CD8-positive, alpha-beta memory T cell (primary cell): ENCODE measurements at regions of chr3 and their contacts with region 1.

Region 1: DNA sequence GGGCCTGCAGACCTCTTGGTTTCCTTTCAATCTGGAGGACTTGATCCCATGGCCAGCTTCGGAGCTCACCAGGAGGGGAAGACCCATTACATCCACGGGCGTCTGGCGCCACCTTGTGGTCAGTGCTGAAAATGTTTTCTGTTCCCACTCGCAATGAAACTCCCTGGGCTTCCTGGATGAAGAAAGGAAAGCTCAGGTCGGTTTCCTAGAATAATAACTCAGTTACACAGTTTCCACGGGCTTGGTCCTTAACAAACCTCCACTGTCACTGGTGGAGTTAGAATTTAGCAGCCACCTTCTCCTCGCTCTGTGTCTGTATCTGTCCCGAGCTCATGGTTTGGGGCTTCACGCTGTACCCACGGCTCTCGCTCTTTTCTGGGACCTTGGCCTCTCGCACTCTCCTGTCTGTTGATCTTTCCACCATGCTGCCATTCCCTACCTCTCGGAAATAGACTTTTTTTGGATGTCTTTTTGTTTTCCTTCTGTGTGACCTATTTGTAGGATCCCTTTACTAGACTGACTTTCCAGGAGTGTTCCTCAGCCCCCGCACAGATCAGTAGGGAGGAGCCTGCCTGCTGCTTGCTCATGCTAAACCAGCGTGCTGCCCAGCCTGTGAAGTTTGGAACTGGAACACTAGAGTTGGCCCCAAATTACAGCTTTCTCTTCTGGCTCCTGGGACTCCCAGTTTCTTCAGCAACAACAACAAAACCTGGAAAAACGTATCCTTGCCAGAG is 56.3 kb downstream of the IL20RB start:
- DNase-seq: peak; percentile 71 to 87 (median 77)
- H3K4me3 ChIP-seq: peak overlapping the region; percentile 63
- H3K4me3 Mint-ChIP-seq: peak overlapping the region; percentile 3 to 84 (median 76)
- H3K27ac ChIP-seq: peak overlapping the region; percentile 49
- H3K27ac Mint-ChIP-seq: peak overlapping the region in 4 of 8 donors; percentile 53 to 84 (median 69)
- H3K4me1 ChIP-seq: peaks cover 11% of the 10 kb centered on the region
- H3K4me1 Mint-ChIP-seq: peaks cover 5 to 11% (median 9%) of the 10 kb centered on the region in 3 donors
- H3K27me3 ChIP-seq: no peaks in the 10 kb centered on the region
- H3K27me3 Mint-ChIP-seq: no peaks in the 10 kb centered on the region

Region 2: GRCh38 chr3:136075218-136075808 is 938.8 kb before region 1 on chr3:
- CTCF ChIA-PET with region 1: interaction called, 24 read pairs
- POLR2A ChIA-PET with region 1: no interaction called
- DNase-seq: peak; percentile 54 to 80 (median 59)
- H3K4me3 ChIP-seq: no peak overlapping the region
- H3K4me3 Mint-ChIP-seq: no peak overlapping the region
- H3K27ac ChIP-seq: no peak overlapping the region
- H3K27ac Mint-ChIP-seq: no peak overlapping the region
- H3K4me1 ChIP-seq: no peaks in the 10 kb centered on the region
- H3K4me1 Mint-ChIP-seq: peaks cover 3 to 5% (median 4%) of the 10 kb centered on the region in 3 donors
- H3K27me3 ChIP-seq: no peaks in the 10 kb centered on the region
- H3K27me3 Mint-ChIP-seq: peaks cover 2 to 13% of the 10 kb centered on the region in 2 donors

Region 3: GRCh38 chr3:136396916-136397315 is 617.2 kb before region 1 on chr3:
- CTCF ChIA-PET with region 1: interaction called, 27 read pairs
- POLR2A ChIA-PET with region 1: interaction called, 3 read pairs
- DNase-seq: no peak
- H3K4me3 ChIP-seq: no peak overlapping the region
- H3K4me3 Mint-ChIP-seq: no peak overlapping the region
- H3K27ac ChIP-seq: no peak overlapping the region
- H3K27ac Mint-ChIP-seq: no peak overlapping the region
- H3K4me1 ChIP-seq: no peaks in the 10 kb centered on the region
- H3K4me1 Mint-ChIP-seq: peaks cover 0 to 2% (median 0%) of the 10 kb centered on the region in 3 donors
- H3K27me3 ChIP-seq: no peaks in the 10 kb centered on the region
- H3K27me3 Mint-ChIP-seq: no peaks in the 10 kb centered on the region

Region 4: GRCh38 chr3:137032465-137033120 is 18.5 kb after region 1 on chr3:
- CTCF ChIA-PET with region 1: interaction called, 12 read pairs
- POLR2A ChIA-PET with region 1: no interaction called
- DNase-seq: peak; percentile 46 to 81 (median 57)
- H3K4me3 ChIP-seq: peak overlapping the region; percentile 47
- H3K4me3 Mint-ChIP-seq: peak overlapping the region; percentile 7 to 86 (median 78)
- H3K27ac ChIP-seq: no peak overlapping the region
- H3K27ac Mint-ChIP-seq: peak overlapping the region in 1 of 8 donors; percentile 2
- H3K4me1 ChIP-seq: no peaks in the 10 kb centered on the region
- H3K4me1 Mint-ChIP-seq: peaks cover 9 to 10% (median 9%) of the 10 kb centered on the region in 3 donors
- H3K27me3 ChIP-seq: peaks cover 18% of the 10 kb centered on the region
- H3K27me3 Mint-ChIP-seq: peaks cover 20 to 31% of the 10 kb centered on the region in 2 donors

Region 5: DNA sequence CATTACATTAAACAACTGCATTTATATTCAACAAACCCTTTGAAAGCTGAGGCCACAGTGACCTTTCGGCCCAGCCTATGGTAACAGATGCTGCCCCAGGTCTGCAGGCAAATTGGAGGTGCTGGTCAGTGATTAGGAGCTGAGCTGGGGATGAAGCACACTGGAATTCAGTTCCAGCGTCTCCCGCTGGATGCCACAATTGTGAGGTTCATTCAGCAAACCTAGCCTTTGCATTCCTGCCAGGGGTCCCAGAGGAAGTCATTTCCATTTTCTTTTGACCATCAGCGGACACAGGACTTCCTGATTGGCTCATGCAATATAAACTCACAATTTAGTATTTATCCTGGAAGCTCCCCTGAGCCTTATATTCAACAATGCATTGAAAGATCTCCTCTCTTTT is 33.1 kb after region 1 on chr3:
- CTCF ChIA-PET with region 1: no interaction called
- POLR2A ChIA-PET with region 1: no interaction called
- DNase-seq: no peak
- H3K4me3 ChIP-seq: no peak overlapping the region
- H3K4me3 Mint-ChIP-seq: no peak overlapping the region
- H3K27ac ChIP-seq: no peak overlapping the region
- H3K27ac Mint-ChIP-seq: no peak overlapping the region
- H3K4me1 ChIP-seq: no peaks in the 10 kb centered on the region
- H3K4me1 Mint-ChIP-seq: no peaks in the 10 kb centered on the region
- H3K27me3 ChIP-seq: no peaks in the 10 kb centered on the region
- H3K27me3 Mint-ChIP-seq: peaks cover 23 to 50% of the 10 kb centered on the region in 2 donors

Region 6: DNA sequence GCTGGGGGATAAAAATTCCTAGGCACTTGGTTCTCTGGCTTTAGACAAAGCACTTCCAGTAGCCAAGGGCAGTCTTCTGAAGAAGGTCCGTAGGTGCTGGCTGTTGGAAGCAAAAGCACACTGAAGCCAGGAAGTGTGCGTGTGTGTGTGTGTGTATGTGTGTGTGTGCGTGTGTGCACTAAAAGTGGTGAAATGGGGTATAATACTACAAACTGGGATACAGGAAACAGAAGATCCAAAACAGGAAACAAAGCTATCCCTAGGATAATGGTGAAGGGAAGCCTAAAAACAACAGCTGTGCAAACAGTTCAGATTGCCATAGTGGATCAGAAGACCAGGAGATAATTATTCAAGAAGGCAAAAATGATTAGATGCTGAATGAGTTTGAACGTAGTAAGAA is 47.1 kb after region 1 on chr3:
- CTCF ChIA-PET with region 1: no interaction called
- POLR2A ChIA-PET with region 1: no interaction called
- DNase-seq: no peak
- H3K4me3 ChIP-seq: no peak overlapping the region
- H3K4me3 Mint-ChIP-seq: no peak overlapping the region
- H3K27ac ChIP-seq: no peak overlapping the region
- H3K27ac Mint-ChIP-seq: no peak overlapping the region
- H3K4me1 ChIP-seq: no peaks in the 10 kb centered on the region
- H3K4me1 Mint-ChIP-seq: peaks cover 0 to 4% (median 0%) of the 10 kb centered on the region in 3 donors
- H3K27me3 ChIP-seq: peaks cover 4% of the 10 kb centered on the region
- H3K27me3 Mint-ChIP-seq: peaks cover 8 to 28% of the 10 kb centered on the region in 2 donors